B cell (primary cell): ENCODE measurements at regions of chr17 and their contacts with region 1.

Region 1: DNA sequence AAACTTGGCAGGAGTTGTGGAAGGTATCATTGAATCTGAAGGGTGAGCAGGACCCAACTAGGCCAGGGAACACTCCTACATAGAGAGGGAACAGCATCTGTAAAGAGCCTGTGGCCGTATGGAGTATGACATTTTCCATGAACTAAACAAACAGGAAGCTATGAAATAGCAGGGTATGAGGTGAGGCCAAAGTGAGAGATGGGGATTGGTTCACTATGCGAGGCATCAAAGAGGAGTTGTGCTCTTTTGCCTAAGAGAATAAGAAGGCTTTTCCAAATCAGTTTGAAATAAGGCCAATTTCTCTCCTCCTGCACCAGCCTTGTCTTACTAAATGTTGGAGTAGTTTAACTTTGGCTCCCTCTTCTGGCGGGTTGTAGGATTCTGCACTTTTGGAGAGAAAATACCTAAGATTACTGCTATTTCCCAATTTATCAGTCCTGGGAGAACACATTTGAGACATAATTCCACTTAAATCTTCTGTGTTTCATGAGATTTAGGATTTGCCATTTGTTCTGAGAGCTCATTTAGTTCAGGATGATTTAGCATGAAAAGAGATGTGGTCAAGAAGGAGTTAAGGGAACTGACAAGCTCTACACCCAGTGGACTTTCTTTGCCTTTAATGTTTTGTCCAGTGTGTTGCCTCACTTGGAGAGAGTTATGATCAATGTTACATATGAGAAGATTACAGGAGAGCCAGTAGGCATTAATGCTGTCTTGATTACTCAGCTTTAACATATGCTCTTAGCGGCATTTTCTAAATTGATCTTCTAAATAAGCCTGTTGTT is 55.4 kb downstream of the TNRC6C start:
- DNase-seq: peak; percentile 80
- ATAC-seq: peak; percentile 56
- H3K4me3 ChIP-seq: no peak overlapping the region
- H3K4me3 Mint-ChIP-seq: no peak overlapping the region
- H3K27ac ChIP-seq: no peak overlapping the region
- H3K27ac Mint-ChIP-seq: no peak overlapping the region
- H3K4me1 ChIP-seq: no peaks in the 10 kb centered on the region
- H3K4me1 Mint-ChIP-seq: peaks cover 7% of the 10 kb centered on the region
- H3K27me3 ChIP-seq: no peaks in the 10 kb centered on the region
- H3K27me3 Mint-ChIP-seq: no peaks in the 10 kb centered on the region
- CTCF ChIP-seq: peak; percentile 91

Region 2: GRCh38 chr17:77331301-77331864 is 682.5 kb before region 1 on chr17:
- CTCF ChIA-PET with region 1: interaction called, 25 read pairs
- POLR2A ChIA-PET with region 1: no interaction called
- intact Hi-C with region 1: loop called (anchors 1 kb)
- DNase-seq: peak; percentile 94
- ATAC-seq: peak; percentile 89
- H3K4me3 ChIP-seq: peak overlapping the region in 4 of 5 experiments; percentile 21 to 65 (median 36)
- H3K4me3 Mint-ChIP-seq: peak overlapping the region; percentile 82
- H3K27ac ChIP-seq: peak overlapping the region; percentile 67 to 77
- H3K27ac Mint-ChIP-seq: peak overlapping the region; percentile 85
- H3K4me1 ChIP-seq: peaks cover 41 to 66% of the 10 kb centered on the region in 2 donors
- H3K4me1 Mint-ChIP-seq: peaks cover 53% of the 10 kb centered on the region
- H3K27me3 ChIP-seq: no peaks in the 10 kb centered on the region
- H3K27me3 Mint-ChIP-seq: no peaks in the 10 kb centered on the region
- CTCF ChIP-seq: peak; percentile 93

Region 3: GRCh38 chr17:77542551-77543490 is 471.1 kb before region 1 on chr17:
- CTCF ChIA-PET with region 1: interaction called, 199 read pairs
- POLR2A ChIA-PET with region 1: no interaction called
- intact Hi-C with region 1: loop called (anchors 1 kb)
- DNase-seq: peak; percentile 73
- ATAC-seq: peak; percentile 61
- H3K4me3 ChIP-seq: no peak overlapping the region
- H3K4me3 Mint-ChIP-seq: no peak overlapping the region
- H3K27ac ChIP-seq: no peak overlapping the region
- H3K27ac Mint-ChIP-seq: no peak overlapping the region
- H3K4me1 ChIP-seq: no peaks in the 10 kb centered on the region
- H3K4me1 Mint-ChIP-seq: no peaks in the 10 kb centered on the region
- H3K27me3 ChIP-seq: peaks cover 0 to 16% (median 1%) of the 10 kb centered on the region in 4 experiments
- H3K27me3 Mint-ChIP-seq: peaks cover 33% of the 10 kb centered on the region
- CTCF ChIP-seq: peak; percentile 80

Region 4: GRCh38 chr17:77762734-77763414 is 251.0 kb before region 1 on chr17:
- CTCF ChIA-PET with region 1: interaction called, 12 read pairs
- POLR2A ChIA-PET with region 1: no interaction called
- intact Hi-C with region 1: no loop called
- DNase-seq: no peak
- ATAC-seq: no peak
- H3K4me3 ChIP-seq: no peak overlapping the region
- H3K4me3 Mint-ChIP-seq: no peak overlapping the region
- H3K27ac ChIP-seq: no peak overlapping the region
- H3K27ac Mint-ChIP-seq: no peak overlapping the region
- H3K4me1 ChIP-seq: no peaks in the 10 kb centered on the region
- H3K4me1 Mint-ChIP-seq: no peaks in the 10 kb centered on the region
- H3K27me3 ChIP-seq: peaks cover 0 to 7% (median 2%) of the 10 kb centered on the region in 4 experiments
- H3K27me3 Mint-ChIP-seq: peaks cover 26% of the 10 kb centered on the region
- CTCF ChIP-seq: no peak

Region 5: GRCh38 chr17:77772461-77772897 is 241.4 kb before region 1 on chr17:
- CTCF ChIA-PET with region 1: interaction called, 149 read pairs
- POLR2A ChIA-PET with region 1: no interaction called
- intact Hi-C with region 1: no loop called
- DNase-seq: peak; percentile 79
- ATAC-seq: peak; percentile 91
- H3K4me3 ChIP-seq: no peak overlapping the region
- H3K4me3 Mint-ChIP-seq: no peak overlapping the region
- H3K27ac ChIP-seq: no peak overlapping the region
- H3K27ac Mint-ChIP-seq: no peak overlapping the region
- H3K4me1 ChIP-seq: peaks cover 0 to 11% of the 10 kb centered on the region in 2 donors
- H3K4me1 Mint-ChIP-seq: peaks cover 13% of the 10 kb centered on the region
- H3K27me3 ChIP-seq: peaks cover 0 to 4% (median 2%) of the 10 kb centered on the region in 4 experiments
- H3K27me3 Mint-ChIP-seq: peaks cover 8% of the 10 kb centered on the region
- CTCF ChIP-seq: peak; percentile 92

Region 6: GRCh38 chr17:77914385-77915254 is 99.3 kb before region 1 on chr17:
- CTCF ChIA-PET with region 1: interaction called, 12 read pairs
- POLR2A ChIA-PET with region 1: no interaction called
- intact Hi-C with region 1: no loop called
- DNase-seq: peak; percentile 56
- ATAC-seq: no peak
- H3K4me3 ChIP-seq: no peak overlapping the region
- H3K4me3 Mint-ChIP-seq: no peak overlapping the region
- H3K27ac ChIP-seq: no peak overlapping the region
- H3K27ac Mint-ChIP-seq: no peak overlapping the region
- H3K4me1 ChIP-seq: peaks cover 18 to 28% of the 10 kb centered on the region in 2 donors
- H3K4me1 Mint-ChIP-seq: peaks cover 24% of the 10 kb centered on the region
- H3K27me3 ChIP-seq: peaks cover 0 to 51% (median 28%) of the 10 kb centered on the region in 4 experiments
- H3K27me3 Mint-ChIP-seq: peaks cover 66% of the 10 kb centered on the region
- CTCF ChIP-seq: no peak

Region 7: GRCh38 chr17:77999413-78000173 is 14.3 kb before region 1 on chr17:
- CTCF ChIA-PET with region 1: interaction called, 25 read pairs
- POLR2A ChIA-PET with region 1: no interaction called
- intact Hi-C with region 1: no loop called
- DNase-seq: no peak
- ATAC-seq: no peak
- H3K4me3 ChIP-seq: no peak overlapping the region
- H3K4me3 Mint-ChIP-seq: no peak overlapping the region
- H3K27ac ChIP-seq: no peak overlapping the region
- H3K27ac Mint-ChIP-seq: no peak overlapping the region
- H3K4me1 ChIP-seq: no peaks in the 10 kb centered on the region
- H3K4me1 Mint-ChIP-seq: peaks cover 28% of the 10 kb centered on the region
- H3K27me3 ChIP-seq: no peaks in the 10 kb centered on the region
- H3K27me3 Mint-ChIP-seq: no peaks in the 10 kb centered on the region
- CTCF ChIP-seq: no peak